K562 (cell line): ENCODE measurements at regions of chr7 and their contacts with region 1.

Region 1: GRCh38 chr7:128387216-128388144 is 22.3 kb downstream of the IMPDH1 start:
- DNase-seq: peak; percentile 88 to 97 (median 96)
- ATAC-seq: peak; percentile 92
- H3K4me3 ChIP-seq: no peak overlapping the region
- H3K27ac ChIP-seq: no peak overlapping the region
- H3K4me1 ChIP-seq: peaks cover 5 to 20% of the 10 kb centered on the region in 2 experiments; a peak in 4 of 5 replicates
- H3K27me3 ChIP-seq: no peaks in the 10 kb centered on the region
- CTCF ChIP-seq: peak; percentile 95 to 97 (median 97)
- EP300 ChIP-seq: no peak
- POLR2A ChIP-seq: no peak
- RAD21 ChIP-seq: peak; percentile 92 to 93

Region 2: DNA sequence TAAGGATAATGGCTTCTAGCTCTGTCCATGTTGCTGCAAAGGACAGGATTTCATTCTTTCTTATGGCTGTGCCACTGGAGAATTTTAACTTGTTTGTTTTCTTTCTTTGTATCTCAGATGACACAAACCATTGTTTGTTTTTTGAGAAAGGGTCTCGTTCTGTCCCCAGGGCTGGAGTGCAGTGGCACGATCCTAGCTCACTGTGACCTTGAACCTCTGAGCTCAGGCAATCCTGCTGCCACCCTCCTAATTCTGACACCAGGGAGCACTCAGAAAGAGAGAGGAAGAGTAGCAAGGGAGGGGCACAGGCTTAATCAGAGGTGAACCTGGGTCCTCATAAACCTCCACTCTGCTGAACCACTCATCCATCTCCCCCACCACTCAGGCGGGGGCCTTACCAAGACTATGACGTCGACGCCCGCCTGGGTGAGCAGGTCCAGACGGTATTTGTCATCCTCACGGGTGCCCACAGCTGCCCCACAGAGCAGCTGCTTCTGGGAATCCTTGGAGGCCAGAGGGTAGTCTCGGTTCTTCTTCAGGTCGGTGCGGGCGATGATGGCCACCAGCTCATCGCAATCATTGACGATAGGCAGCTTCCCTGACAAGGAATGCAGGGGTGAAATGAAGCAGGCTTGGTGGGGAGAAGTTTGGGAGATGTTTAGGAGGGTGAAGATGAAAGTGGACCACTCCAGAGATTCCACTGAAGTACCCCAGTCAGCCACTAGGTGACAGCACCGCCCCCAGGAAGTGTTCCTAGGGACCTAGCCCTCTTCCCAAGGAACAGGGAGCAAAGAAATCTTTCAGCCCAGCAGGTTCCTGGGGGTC is 10.7 kb after region 1 on chr7:
- CTCF ChIA-PET with region 1: no interaction called
- POLR2A ChIA-PET with region 1: interaction called, 11 read pairs
- in situ Hi-C with region 1: no loop called
- intact Hi-C with region 1: no loop called
- DNase-seq: peak; percentile 73 to 79 (median 75)
- ATAC-seq: peak; percentile 86
- H3K4me3 ChIP-seq: no peak overlapping the region
- H3K27ac ChIP-seq: no peak overlapping the region
- H3K4me1 ChIP-seq: peaks cover 0 to 12% of the 10 kb centered on the region in 2 experiments; a peak in 2 of 5 replicates
- H3K27me3 ChIP-seq: no peaks in the 10 kb centered on the region
- CTCF ChIP-seq: peak; percentile 95 to 99 (median 98)
- EP300 ChIP-seq: 0 out of 2 replicates have a peak, but pooled peaks have one; percentile 13
- POLR2A ChIP-seq: 0 out of 2 replicates have a peak, but pooled peaks have one; percentile 19
- RAD21 ChIP-seq: peak; percentile 93 to 98

Region 3: GRCh38 chr7:128728598-128728997 is 341.1 kb after region 1 on chr7:
- CTCF ChIA-PET with region 1: no interaction called
- POLR2A ChIA-PET with region 1: no interaction called
- in situ Hi-C with region 1: no loop called
- intact Hi-C with region 1: no loop called
- DNase-seq: no peak
- ATAC-seq: no peak
- H3K4me3 ChIP-seq: no peak overlapping the region
- H3K27ac ChIP-seq: no peak overlapping the region
- H3K4me1 ChIP-seq: peaks cover 5 to 21% of the 10 kb centered on the region in 2 experiments
- H3K27me3 ChIP-seq: peaks cover 5 to 6% of the 10 kb centered on the region in 2 experiments; a peak in 1 of 5 replicates
- CTCF ChIP-seq: no peak
- EP300 ChIP-seq: no peak
- POLR2A ChIP-seq: no peak
- RAD21 ChIP-seq: no peak

Region 4: DNA sequence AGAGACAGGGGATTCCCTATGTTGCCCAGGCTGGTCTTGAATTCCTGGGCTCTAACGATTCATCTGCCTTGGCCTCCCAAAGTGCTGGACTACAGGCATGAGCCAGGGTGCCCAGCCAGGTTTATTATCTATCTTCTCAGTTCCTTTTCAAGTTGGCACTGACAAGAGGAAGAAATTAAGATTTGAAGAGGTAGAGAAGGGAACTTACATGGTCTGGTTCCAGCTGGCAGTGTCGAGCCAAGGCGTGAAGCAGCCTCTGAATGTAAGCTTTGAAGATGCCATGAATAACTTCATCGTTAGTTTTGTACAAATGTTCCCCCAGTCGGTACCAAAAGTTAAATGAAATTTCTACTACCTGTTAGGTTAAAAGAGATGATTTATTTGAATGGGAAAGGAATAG is 609.7 kb after region 1 on chr7:
- CTCF ChIA-PET with region 1: no interaction called
- POLR2A ChIA-PET with region 1: no interaction called
- in situ Hi-C with region 1: no loop called
- intact Hi-C with region 1: no loop called
- DNase-seq: no peak
- ATAC-seq: no peak
- H3K4me3 ChIP-seq: no peak overlapping the region
- H3K27ac ChIP-seq: no peak overlapping the region
- H3K4me1 ChIP-seq: no peaks in the 10 kb centered on the region
- H3K27me3 ChIP-seq: no peaks in the 10 kb centered on the region
- CTCF ChIP-seq: no peak
- EP300 ChIP-seq: no peak
- POLR2A ChIP-seq: no peak
- RAD21 ChIP-seq: no peak